Ascending aorta (tissue), 2 donors: ENCODE measurements at regions of chr17 and their contacts with region 1.

Region 1: DNA sequence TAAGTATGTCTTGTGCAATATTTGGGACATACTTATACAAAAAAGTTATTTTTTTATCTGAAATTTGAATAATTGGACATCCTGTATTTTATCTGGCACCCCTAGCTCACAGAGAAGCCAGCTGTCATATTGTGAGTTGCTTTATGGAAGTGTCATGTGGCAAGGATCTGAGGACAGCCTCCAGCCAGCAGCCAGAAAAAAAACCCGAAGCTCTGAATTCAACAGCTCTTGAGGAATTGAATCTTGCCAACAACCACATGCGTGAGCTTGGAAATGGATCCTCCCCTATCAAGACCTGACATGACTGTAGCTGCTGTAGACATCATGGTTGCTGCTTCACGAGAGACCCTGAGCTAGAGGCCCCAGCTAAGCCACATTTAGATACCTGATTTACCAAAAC is 187.2 kb upstream of the SHISA6 start:
- DNase-seq: no peak
- H3K4me3 ChIP-seq: no peak overlapping the region
- H3K27ac ChIP-seq: no peak overlapping the region
- H3K4me1 ChIP-seq: no peaks in the 10 kb centered on the region
- H3K27me3 ChIP-seq: no peaks in the 10 kb centered on the region
- CTCF ChIP-seq: no peak

Region 2: GRCh38 chr17:11035681-11036080 is 18.2 kb before region 1 on chr17:
- intact Hi-C with region 1: loop called (anchors 2 kb)
- DNase-seq: no peak
- H3K4me3 ChIP-seq: no peak overlapping the region
- H3K27ac ChIP-seq: no peak overlapping the region
- H3K4me1 ChIP-seq: no peaks in the 10 kb centered on the region
- H3K27me3 ChIP-seq: no peaks in the 10 kb centered on the region
- CTCF ChIP-seq: no peak

Region 3: GRCh38 chr17:11182430-11182829 is 128.6 kb after region 1 on chr17:
- intact Hi-C with region 1: no loop called
- DNase-seq: no peak
- H3K4me3 ChIP-seq: no peak overlapping the region
- H3K27ac ChIP-seq: no peak overlapping the region
- H3K4me1 ChIP-seq: no peaks in the 10 kb centered on the region
- H3K27me3 ChIP-seq: no peaks in the 10 kb centered on the region
- CTCF ChIP-seq: no peak

Region 4: DNA sequence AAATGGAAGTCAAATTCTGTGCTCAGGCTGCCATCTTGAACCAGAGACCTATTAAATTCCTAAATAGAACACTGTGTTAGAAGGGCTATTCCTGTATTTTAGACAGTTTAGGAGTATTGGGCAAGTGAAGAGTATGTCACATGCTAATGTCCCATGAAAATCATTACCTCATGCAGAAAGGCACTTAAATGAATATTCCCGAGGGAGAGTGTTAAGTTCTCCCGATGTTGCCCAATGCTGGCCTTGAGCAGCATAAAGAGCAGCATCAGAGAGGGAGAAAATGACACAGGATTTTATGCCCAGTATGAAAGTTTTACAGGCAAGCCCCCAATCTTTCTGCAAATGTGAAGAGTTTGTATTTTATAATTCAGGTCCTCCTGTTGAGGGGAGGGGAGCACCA is 158.9 kb after region 1 on chr17:
- intact Hi-C with region 1: no loop called
- DNase-seq: no peak
- H3K4me3 ChIP-seq: no peak overlapping the region
- H3K27ac ChIP-seq: no peak overlapping the region
- H3K4me1 ChIP-seq: no peaks in the 10 kb centered on the region
- H3K27me3 ChIP-seq: no peaks in the 10 kb centered on the region
- CTCF ChIP-seq: no peak